ENCODE measurements at regions of chr1 and their contacts with region 1.

Region 1: GRCh38 chr1:185314411-185314810 is 2.6 kb downstream of the IVNS1ABP start:
- DNase-seq: no peak
- H3K4me3 ChIP-seq: no peak overlapping the region
- CTCF ChIP-seq: no peak
- POLR2A ChIP-seq: no peak

Region 2: GRCh38 chr1:184208622-184209021 is 1105.8 kb before region 1 on chr1:
- intact Hi-C with region 1: no loop called
- DNase-seq: no peak
- H3K4me3 ChIP-seq: no peak overlapping the region
- CTCF ChIP-seq: no peak
- POLR2A ChIP-seq: no peak

Region 3: GRCh38 chr1:185229981-185230380 is 84.4 kb before region 1 on chr1:
- intact Hi-C with region 1: no loop called
- DNase-seq: no peak
- H3K4me3 ChIP-seq: no peak overlapping the region
- CTCF ChIP-seq: no peak
- POLR2A ChIP-seq: no peak

Region 4: GRCh38 chr1:185880779-185881333 is 566.4 kb after region 1 on chr1:
- intact Hi-C with region 1: loop called (anchors 5 kb)
- DNase-seq: no peak
- H3K4me3 ChIP-seq: no peak overlapping the region
- CTCF ChIP-seq: no peak
- POLR2A ChIP-seq: no peak

Measured in lower leg skin (tissue), 4 donors.